Left lung (tissue), 14 donors: ENCODE measurements at regions of chr20 and their contacts with region 1.

Region 1: DNA sequence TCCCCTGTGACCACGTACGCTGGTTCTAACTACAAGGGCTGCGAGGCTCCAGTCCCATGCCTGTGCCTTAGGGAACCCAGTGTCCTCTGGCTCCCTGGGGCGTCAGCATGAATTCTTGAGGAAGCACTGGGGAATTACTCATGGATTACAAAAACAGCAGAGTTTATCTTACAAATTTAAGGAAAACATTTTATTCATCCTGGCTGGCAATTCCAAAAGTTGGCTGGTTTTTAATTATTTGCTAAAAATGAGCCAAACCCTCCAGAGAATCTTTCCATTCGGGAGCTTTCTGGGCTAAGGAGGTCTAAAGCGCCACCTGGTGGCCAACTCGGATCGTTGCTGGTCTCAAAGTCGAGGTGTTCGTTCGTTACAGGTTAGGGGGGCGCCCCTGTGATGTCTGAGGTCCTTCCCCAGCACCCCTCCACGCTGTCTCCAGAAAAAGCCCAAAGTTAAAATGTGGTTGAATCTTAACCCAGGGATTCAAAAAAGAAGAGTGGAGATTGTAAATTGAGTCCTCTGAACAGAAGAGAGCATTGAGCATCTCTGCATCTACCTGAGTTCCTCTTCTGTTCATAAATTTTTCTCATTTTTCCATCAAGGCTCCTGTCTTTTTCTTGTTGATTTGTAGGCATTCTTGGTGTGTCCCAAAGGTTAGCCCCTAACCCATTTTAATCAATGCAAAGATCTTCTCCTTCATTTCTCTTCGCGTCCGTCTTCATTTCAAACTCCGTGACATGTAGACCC is 99.4 kb downstream of the BFSP1 start:
- DNase-seq: peak in 2 of 4 donors; percentile 37 to 70
- ATAC-seq: peak; percentile 76
- H3K4me3 ChIP-seq: no peak overlapping the region
- H3K27ac ChIP-seq: no peak overlapping the region
- H3K4me1 ChIP-seq: no peaks in the 10 kb centered on the region
- H3K27me3 ChIP-seq: peaks cover 0 to 17% of the 10 kb centered on the region in 2 donors
- CTCF ChIP-seq: peak; percentile 76 to 85

Region 2: DNA sequence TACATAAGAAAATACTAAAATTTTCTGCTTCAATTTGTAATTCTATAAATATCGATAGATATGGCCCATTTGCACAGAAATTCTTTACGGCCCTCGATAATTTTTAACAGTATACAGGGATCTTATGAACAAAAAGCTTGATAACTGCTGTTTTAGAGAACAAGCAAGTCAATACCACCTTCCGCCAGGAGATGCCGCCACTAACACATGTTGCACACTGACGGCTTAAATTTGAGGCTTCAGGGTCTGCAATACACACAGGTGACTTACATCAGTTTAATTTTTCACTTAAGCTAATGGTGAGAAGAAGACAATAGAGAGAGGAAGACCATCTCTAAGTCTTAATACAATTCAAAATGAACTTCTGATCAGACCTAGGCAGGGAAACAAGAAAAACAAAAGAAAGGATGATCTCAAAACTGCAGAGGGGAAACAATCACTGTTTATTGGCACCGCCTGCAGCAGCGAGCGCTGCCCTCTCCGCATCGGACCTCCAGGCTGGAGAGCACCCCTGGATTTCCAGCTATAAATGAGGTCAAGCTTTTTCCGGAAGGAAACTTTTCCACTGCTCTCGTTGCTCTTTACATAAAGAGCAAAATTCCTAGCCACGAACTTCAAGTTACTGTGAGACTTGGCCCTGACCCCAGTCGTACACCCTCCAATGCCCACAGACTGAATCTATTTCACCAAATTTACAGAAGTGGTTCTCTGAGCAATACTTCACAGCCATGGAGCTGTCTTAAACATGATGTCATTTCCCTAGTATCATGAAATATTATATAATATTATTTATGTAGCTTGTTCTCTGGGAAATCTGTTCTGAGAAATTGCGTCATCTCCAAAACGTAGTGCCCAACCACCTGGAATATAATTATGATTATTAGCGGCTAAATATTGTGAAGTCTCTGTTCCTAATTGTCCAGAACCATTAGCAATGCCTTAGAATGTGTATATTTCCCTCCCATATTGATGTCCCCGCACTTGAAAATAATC is 629.6 kb before region 1 on chr20:
- intact Hi-C with region 1: loop called in 1 of 2 experiments (anchors 5 kb)
- DNase-seq: peak in 3 of 4 donors; percentile 18 to 60 (median 38)
- ATAC-seq: peak; percentile 82
- H3K4me3 ChIP-seq: no peak overlapping the region
- H3K27ac ChIP-seq: no peak overlapping the region
- H3K4me1 ChIP-seq: peaks cover 0 to 3% of the 10 kb centered on the region in 2 donors
- H3K27me3 ChIP-seq: peaks cover 12 to 25% of the 10 kb centered on the region in 2 donors
- CTCF ChIP-seq: peak; percentile 68 to 88

Region 3: GRCh38 chr20:18048176-18048575 is 616.4 kb after region 1 on chr20:
- intact Hi-C with region 1: no loop called
- DNase-seq: no peak
- ATAC-seq: no peak
- H3K4me3 ChIP-seq: no peak overlapping the region
- H3K27ac ChIP-seq: no peak overlapping the region
- H3K4me1 ChIP-seq: no peaks in the 10 kb centered on the region
- H3K27me3 ChIP-seq: peaks cover 0 to 22% of the 10 kb centered on the region in 2 donors
- CTCF ChIP-seq: no peak